A549 (cell line): ENCODE measurements at regions of chr2 and their contacts with region 1.

Region 1: GRCh38 chr2:27683390-27684071 is 19.8 kb downstream of the SLC4A1AP start:
- DNase-seq: peak; percentile 60 to 95
- ATAC-seq: peak; percentile 81 to 92
- H3K4me3 ChIP-seq: no peak overlapping the region
- H3K27ac ChIP-seq: peak overlapping the region; percentile 52 to 78
- H3K4me1 ChIP-seq: peaks cover 31% of the 10 kb centered on the region
- CTCF ChIP-seq: peak; percentile 100
- EP300 ChIP-seq: no peak
- POLR2A ChIP-seq: no peak
- RAD21 ChIP-seq: peak; percentile 94 to 95

Region 2: GRCh38 chr2:27622921-27623384 is 60.6 kb before region 1 on chr2:
- CTCF ChIA-PET with region 1: interaction called, 13 read pairs
- POLR2A ChIA-PET with region 1: no interaction called
- DNase-seq: no peak
- ATAC-seq: no peak
- H3K4me3 ChIP-seq: no peak overlapping the region
- H3K27ac ChIP-seq: no peak overlapping the region
- H3K4me1 ChIP-seq: peaks cover 6% of the 10 kb centered on the region
- CTCF ChIP-seq: no peak
- EP300 ChIP-seq: no peak
- POLR2A ChIP-seq: no peak
- RAD21 ChIP-seq: no peak

Region 3: DNA sequence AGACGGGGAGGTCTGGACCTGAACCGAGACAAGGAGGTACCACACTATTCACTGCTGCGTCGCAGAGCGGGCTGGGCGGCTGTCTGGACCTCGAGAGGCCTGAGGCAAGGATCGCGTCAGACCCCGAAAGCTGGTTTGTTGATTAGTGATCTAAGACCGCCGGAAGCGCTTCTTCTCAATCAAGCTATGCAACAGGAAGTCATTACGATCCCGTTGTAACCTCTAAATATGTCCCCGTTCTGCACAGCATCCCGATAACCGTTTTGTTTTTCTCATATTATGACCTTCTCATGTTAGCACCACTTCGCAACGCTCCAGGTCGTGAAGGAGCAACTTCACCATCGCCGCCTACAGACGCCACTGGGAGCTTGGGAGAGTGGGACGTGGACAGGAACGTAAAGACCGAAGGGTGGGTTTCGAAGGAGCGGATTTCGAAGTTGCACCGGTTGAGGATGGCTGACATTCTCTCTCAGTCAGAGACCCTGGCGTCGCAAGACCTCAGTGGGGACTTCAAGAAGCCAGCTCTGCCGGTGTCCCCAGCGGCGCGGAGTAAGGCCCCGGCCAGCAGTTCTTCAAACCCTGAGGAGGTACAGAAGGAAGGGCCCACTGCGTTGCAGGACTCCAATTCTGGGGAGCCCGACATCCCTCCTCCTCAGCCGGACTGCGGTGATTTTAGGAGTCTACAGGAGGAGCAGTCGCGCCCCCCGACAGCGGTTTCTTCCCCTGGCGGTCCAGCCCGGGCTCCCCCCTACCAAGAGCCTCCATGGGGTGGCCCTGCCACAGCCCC is 19.9 kb before region 1 on chr2 and contains the starts of genes SLC4A1AP and SUPT7L:
- CTCF ChIA-PET with region 1: interaction called, 118 read pairs
- POLR2A ChIA-PET with region 1: interaction called, 10 read pairs
- DNase-seq: peak; percentile 84 to 93
- ATAC-seq: peak; percentile 85 to 86
- H3K4me3 ChIP-seq: peak within 1 kb of the TSS; percentile 97
- H3K27ac ChIP-seq: peak within 1 kb of the TSS; percentile 83 to 93
- H3K4me1 ChIP-seq: peaks cover 24% of the 10 kb centered on the region
- CTCF ChIP-seq: peak; percentile 4; the same call in 1 of the 3 replicates
- EP300 ChIP-seq: no peak
- POLR2A ChIP-seq: peak; percentile 68
- RAD21 ChIP-seq: peak in 1 of 2 experiments; percentile 35; a peak in 3 of 5 replicates
- polyA plus RNA-seq, gene SLC4A1AP: 21.1 and 33.0 TPM in 2 replicates
- polyA plus RNA-seq, gene SUPT7L: 67.0 and 73.1 TPM in 2 replicates

Region 4: GRCh38 chr2:27703638-27704341 is 20.3 kb after region 1 on chr2:
- CTCF ChIA-PET with region 1: interaction called, 46 read pairs
- POLR2A ChIA-PET with region 1: interaction called, 3 read pairs
- DNase-seq: peak; percentile 90
- ATAC-seq: peak; percentile 68 to 77
- H3K4me3 ChIP-seq: no peak overlapping the region
- H3K27ac ChIP-seq: peak overlapping the region; percentile 91 to 99
- H3K4me1 ChIP-seq: peaks cover 65% of the 10 kb centered on the region
- CTCF ChIP-seq: peak; percentile 98
- EP300 ChIP-seq: no peak
- POLR2A ChIP-seq: no peak
- RAD21 ChIP-seq: peak; percentile 99

Region 5: DNA sequence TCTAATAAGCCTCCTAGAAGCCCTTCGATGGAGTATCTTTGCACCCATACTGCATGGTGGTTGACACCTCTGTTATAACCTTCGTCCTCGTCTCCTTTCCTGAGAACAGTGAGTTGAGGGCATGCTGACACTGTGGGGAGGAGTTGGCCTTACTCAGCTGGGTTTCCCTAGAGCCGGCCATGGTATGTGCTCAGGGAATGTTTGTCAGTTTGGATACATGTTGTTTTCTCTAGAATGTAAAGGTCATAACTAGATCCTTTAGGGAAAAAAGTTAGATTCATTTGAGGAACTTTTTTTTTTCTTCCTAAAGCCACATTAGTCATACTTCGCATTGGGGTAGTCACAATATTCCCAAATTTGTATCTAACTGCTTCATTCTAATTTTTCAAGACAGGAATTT is 603.1 kb after region 1 on chr2:
- CTCF ChIA-PET with region 1: no interaction called
- POLR2A ChIA-PET with region 1: no interaction called
- DNase-seq: no peak
- ATAC-seq: no peak; a peak in 1 of 6 replicates
- H3K4me3 ChIP-seq: no peak overlapping the region
- H3K27ac ChIP-seq: peak overlapping the region in 1 of 2 experiments; percentile 39; a peak in 3 of 6 replicates
- H3K4me1 ChIP-seq: peaks cover 19% of the 10 kb centered on the region
- CTCF ChIP-seq: no peak
- EP300 ChIP-seq: no peak
- POLR2A ChIP-seq: no peak
- RAD21 ChIP-seq: no peak

Region 6: GRCh38 chr2:28406276-28407096 is 723.0 kb after region 1 on chr2:
- CTCF ChIA-PET with region 1: interaction called, 24 read pairs
- POLR2A ChIA-PET with region 1: no interaction called
- DNase-seq: no peak
- ATAC-seq: peak in 1 of 2 experiments; percentile 5; a peak in 3 of 6 replicates
- H3K4me3 ChIP-seq: no peak overlapping the region
- H3K27ac ChIP-seq: peak overlapping the region in 1 of 2 experiments; percentile 79; a peak in 3 of 6 replicates
- H3K4me1 ChIP-seq: peaks cover 89% of the 10 kb centered on the region
- CTCF ChIP-seq: no peak
- EP300 ChIP-seq: no peak
- POLR2A ChIP-seq: no peak
- RAD21 ChIP-seq: no peak

Region 7: DNA sequence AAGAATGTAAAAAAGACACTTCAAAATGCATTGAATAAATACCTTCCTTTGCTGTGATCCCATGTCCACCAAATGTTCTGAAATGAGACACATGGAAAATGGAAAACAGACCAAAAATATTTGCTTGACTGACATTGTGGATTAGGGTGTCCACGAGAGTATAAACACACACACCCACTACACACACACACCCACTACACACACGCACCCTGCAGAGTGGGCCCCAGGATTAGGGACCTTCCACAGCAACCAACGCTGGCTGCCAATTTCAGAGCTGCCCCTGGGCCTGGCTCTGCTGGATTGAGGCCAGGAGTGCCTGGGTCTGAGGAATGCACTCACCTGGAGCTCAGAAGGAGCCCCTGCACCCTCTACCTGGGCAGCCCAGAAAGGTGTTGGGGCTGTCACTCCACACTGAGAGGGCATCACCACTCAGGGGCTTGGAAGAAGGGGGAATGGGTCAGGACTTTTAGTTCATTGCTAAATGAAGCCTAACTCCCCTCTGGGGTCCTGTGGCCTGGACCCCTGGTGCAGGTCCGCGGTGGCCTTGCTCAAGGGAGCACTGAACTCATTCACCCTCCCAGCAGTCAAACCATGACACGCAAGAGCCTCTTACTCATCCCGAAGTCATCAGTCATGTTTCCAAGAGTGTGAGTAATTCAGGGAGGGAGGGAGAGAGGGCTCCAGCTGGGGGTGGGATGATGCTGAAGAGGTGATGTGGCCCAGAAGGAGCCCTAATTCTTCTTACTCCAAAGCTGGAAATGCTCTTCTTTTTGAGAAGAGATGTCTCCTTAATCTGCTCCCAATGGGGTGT is 762.1 kb after region 1 on chr2:
- CTCF ChIA-PET with region 1: interaction called, 13 read pairs
- POLR2A ChIA-PET with region 1: no interaction called
- DNase-seq: peak; percentile 86 to 87
- ATAC-seq: peak; percentile 91 to 93
- H3K4me3 ChIP-seq: no peak overlapping the region
- H3K27ac ChIP-seq: peak overlapping the region; percentile 70 to 87
- H3K4me1 ChIP-seq: peaks cover 67% of the 10 kb centered on the region
- CTCF ChIP-seq: no peak
- EP300 ChIP-seq: peak in 1 of 2 experiments; percentile 42; a peak in 1 of 5 replicates
- POLR2A ChIP-seq: no peak
- RAD21 ChIP-seq: 0 out of 5 replicates have a peak, but pooled peaks have one; percentile 18 to 21